ENCODE measurements at regions of chr16 and their contacts with region 1.

Region 1: GRCh38 chr16:85027349-85027957 is at the start of gene KIAA0513:
- DNase-seq: peak; percentile 98
- ATAC-seq: peak; percentile 43
- H3K4me3 Mint-ChIP-seq: peak within 1 kb of the TSS; percentile 83
- H3K27ac Mint-ChIP-seq: peak within 1 kb of the TSS; percentile 97
- H3K4me1 Mint-ChIP-seq: peaks cover 37% of the 10 kb centered on the region
- H3K27me3 Mint-ChIP-seq: no peaks in the 10 kb centered on the region
- total RNA-seq, gene KIAA0513: 9.6 to 10.4 TPM

Region 2: DNA sequence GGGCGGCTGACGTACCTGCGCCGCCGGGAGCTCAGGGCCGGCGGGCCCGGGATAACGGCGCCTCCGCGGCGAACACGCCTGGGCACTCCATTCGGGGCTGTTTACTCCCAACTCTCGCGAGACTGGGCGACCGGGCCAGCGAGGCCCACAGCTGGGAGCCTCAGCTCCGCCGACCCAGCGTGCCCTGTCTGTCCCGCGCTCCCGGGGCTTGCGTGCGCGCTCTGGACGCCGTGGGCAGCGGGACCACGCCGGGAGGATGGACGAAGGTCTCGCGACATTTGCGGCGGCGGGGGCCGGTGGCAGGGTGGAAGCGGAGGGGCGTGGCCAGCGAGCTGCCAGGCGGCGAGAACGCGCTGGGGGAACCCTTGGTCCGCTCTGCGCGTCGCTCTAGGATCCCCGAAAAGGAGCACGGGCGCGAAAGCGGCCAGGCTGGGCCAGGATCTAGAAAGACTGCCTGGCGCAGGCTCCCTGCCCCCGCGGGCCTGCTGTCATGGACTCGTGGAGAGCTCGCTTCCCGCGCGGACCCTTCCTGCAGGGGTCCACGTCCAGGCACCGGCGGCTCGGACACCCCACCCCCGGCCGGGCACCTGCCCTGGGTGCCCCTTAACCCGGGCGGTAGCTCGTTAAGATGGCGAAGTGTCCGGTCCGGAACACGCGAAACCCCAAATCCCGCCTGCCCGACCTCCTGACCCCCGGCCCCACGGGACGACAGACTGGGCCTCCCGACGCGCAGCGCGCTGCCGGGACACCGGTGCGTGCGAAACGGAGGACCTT is 910.5 kb before region 1 on chr16 and contains the start of gene MBTPS1:
- CTCF ChIA-PET with region 1: no interaction called
- POLR2A ChIA-PET with region 1: no interaction called
- intact Hi-C with region 1: loop called in 1 of 2 experiments (anchors 5 kb)
- DNase-seq: peak; percentile 99
- ATAC-seq: peak; percentile 93
- H3K4me3 Mint-ChIP-seq: peak within 1 kb of the TSS; percentile 80
- H3K27ac Mint-ChIP-seq: peak within 1 kb of the TSS; percentile 95
- H3K4me1 Mint-ChIP-seq: peaks cover 31% of the 10 kb centered on the region
- H3K27me3 Mint-ChIP-seq: no peaks in the 10 kb centered on the region
- total RNA-seq, gene MBTPS1: 32.0 to 32.2 TPM

Region 3: DNA sequence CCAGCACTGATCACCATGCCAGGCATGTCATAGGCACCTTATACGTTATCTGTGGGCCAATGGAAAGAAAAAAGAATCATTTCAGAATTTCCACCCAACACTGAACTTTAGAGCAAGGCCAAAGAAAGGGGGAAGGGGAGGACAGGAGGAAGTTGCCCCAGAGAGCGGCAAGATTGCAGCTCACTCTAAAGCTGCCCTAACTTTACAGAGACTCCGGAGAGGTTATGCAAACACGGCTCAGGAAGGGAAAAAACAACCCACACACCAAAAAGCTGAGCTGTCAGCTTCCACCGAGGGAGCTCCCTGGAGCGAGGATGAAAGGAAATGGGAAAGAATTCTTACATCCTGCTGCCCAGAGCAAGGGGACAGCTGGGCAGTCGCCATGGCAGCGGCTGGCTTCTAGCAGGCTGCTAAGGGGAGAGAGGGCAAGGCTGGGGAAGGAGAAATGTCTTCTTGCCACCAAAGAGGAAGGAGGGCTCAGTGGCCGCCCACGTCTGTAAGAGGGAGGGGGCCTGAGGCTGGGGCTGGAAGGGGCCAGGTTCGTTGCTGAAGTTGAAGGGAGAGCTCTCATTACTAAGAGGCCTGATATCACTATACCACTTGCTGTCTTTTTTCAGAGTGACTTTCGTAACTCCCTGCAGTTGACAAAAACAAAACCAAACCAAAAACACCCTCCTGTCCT is 427.8 kb before region 1 on chr16:
- CTCF ChIA-PET with region 1: no interaction called
- POLR2A ChIA-PET with region 1: no interaction called
- intact Hi-C with region 1: loop called in 1 of 2 experiments (anchors 2 kb)
- DNase-seq: peak; percentile 90
- ATAC-seq: peak; percentile 58
- H3K4me3 Mint-ChIP-seq: peak overlapping the region; percentile 74
- H3K27ac Mint-ChIP-seq: peak overlapping the region; percentile 97
- H3K4me1 Mint-ChIP-seq: peaks cover 94% of the 10 kb centered on the region
- H3K27me3 Mint-ChIP-seq: no peaks in the 10 kb centered on the region

Region 4: DNA sequence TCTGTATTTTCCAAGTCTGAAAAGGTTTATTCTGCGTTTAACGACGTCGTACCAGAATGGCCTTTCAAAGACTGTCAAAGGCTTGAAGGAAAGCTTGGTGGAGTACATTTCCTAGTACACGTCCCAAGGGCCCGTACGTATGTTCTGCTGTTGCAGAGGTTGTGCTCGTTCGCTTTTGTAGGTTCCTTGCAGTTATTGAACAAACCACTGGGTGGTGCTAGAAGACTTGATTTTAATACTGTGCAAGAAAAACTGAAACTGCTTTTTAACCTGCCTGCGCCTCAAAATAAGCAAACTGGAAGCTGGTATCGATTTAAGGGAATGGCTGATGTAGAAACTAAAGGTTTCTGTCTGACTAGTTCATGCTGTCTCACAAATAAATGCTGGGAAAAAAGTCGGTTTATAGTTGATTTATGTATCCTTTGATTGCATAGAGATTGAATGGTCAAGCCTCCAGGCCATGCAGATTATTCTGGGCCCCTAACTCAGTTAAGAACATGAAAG is 273.0 kb before region 1 on chr16:
- CTCF ChIA-PET with region 1: no interaction called
- POLR2A ChIA-PET with region 1: no interaction called
- intact Hi-C with region 1: loop called in 1 of 2 experiments (anchors 5 kb)
- DNase-seq: peak; percentile 76
- ATAC-seq: peak; percentile 78
- H3K4me3 Mint-ChIP-seq: no peak overlapping the region
- H3K27ac Mint-ChIP-seq: peak overlapping the region; percentile 49
- H3K4me1 Mint-ChIP-seq: peaks cover 84% of the 10 kb centered on the region
- H3K27me3 Mint-ChIP-seq: no peaks in the 10 kb centered on the region

Region 5: DNA sequence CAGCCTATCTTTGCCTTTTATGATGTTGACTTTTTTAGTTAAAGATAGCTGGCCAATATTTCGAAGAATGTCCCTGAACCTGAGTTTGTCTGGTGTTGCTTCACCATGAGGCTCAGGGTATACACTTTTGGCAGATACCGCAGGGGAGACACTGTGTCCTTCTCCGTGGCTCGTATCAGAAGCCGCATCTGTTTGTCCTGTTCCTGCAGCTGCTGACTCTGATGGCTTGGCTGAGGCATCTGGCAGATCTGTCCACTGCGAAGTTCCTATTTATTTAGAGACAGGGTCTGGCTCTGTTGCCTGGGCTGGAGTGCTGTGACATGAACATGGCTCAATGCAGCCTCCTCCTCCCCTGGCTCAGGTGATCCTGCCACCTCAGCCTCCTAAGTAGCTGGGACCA is 114.1 kb before region 1 on chr16:
- CTCF ChIA-PET with region 1: no interaction called
- POLR2A ChIA-PET with region 1: no interaction called
- intact Hi-C with region 1: no loop called
- DNase-seq: no peak
- ATAC-seq: no peak
- H3K4me3 Mint-ChIP-seq: no peak overlapping the region
- H3K27ac Mint-ChIP-seq: no peak overlapping the region
- H3K4me1 Mint-ChIP-seq: no peaks in the 10 kb centered on the region
- H3K27me3 Mint-ChIP-seq: peaks cover 11% of the 10 kb centered on the region

Region 6: GRCh38 chr16:85086347-85087291 is 59.2 kb after region 1 on chr16:
- CTCF ChIA-PET with region 1: interaction called, 10 read pairs
- POLR2A ChIA-PET with region 1: no interaction called
- intact Hi-C with region 1: loop called (anchors 1 to 2 kb)
- DNase-seq: peak; percentile 86
- ATAC-seq: peak; percentile 95
- H3K4me3 Mint-ChIP-seq: no peak overlapping the region
- H3K27ac Mint-ChIP-seq: no peak overlapping the region
- H3K4me1 Mint-ChIP-seq: peaks cover 32% of the 10 kb centered on the region
- H3K27me3 Mint-ChIP-seq: no peaks in the 10 kb centered on the region

Region 7: DNA sequence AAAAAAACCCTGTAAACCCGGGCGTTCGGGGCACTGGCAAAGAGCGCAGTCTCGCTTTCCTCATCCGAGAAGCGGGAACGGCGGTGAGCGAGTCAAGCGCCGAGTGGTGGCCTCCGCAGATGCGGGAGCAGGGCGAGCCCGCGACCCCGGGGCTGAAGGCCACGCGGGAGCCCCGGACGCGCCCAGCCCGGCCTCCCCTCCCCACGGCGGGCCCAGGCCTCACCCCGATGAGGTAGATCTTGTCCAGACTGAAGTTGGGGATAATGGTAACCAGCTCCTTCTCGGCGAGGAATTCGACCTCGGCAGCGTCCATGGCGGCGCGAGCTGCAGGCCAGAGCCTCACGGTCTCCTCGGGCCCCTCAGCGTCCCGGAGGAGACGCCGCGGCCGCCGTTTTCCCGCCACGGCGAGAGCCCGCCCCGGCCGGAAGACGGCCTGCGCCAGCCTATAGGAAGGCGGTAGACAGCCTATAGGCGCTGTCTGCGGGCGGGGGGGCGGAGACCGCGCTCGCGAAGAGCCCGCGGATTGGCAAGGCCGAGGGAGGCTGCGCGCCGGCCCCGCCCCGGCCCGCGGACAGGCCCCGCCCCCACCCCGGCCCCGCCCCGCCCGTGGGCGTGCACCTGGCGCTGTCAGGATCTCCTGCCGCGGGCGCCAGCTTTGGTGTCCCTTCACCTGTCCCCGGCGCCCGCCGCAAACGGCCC is 661.3 kb after region 1 on chr16 and contains the start of gene GINS2:
- CTCF ChIA-PET with region 1: no interaction called
- POLR2A ChIA-PET with region 1: no interaction called
- intact Hi-C with region 1: loop called in 1 of 2 experiments (anchors 2 kb)
- DNase-seq: peak; percentile 96
- ATAC-seq: peak; percentile 100
- H3K4me3 Mint-ChIP-seq: peak within 1 kb of the TSS; percentile 88
- H3K27ac Mint-ChIP-seq: peak within 1 kb of the TSS; percentile 93
- H3K4me1 Mint-ChIP-seq: peaks cover 18% of the 10 kb centered on the region
- H3K27me3 Mint-ChIP-seq: peaks cover 4% of the 10 kb centered on the region
- total RNA-seq, gene GINS2: 86.4 to 87.5 TPM

Measured in activated CD4-positive, alpha-beta T cell treated with anti-CD3 and anti-CD28 coated beads for 36 hours (primary cell).